ENCODE measurements at regions of chr9 and their contacts with region 1.

Region 1: DNA sequence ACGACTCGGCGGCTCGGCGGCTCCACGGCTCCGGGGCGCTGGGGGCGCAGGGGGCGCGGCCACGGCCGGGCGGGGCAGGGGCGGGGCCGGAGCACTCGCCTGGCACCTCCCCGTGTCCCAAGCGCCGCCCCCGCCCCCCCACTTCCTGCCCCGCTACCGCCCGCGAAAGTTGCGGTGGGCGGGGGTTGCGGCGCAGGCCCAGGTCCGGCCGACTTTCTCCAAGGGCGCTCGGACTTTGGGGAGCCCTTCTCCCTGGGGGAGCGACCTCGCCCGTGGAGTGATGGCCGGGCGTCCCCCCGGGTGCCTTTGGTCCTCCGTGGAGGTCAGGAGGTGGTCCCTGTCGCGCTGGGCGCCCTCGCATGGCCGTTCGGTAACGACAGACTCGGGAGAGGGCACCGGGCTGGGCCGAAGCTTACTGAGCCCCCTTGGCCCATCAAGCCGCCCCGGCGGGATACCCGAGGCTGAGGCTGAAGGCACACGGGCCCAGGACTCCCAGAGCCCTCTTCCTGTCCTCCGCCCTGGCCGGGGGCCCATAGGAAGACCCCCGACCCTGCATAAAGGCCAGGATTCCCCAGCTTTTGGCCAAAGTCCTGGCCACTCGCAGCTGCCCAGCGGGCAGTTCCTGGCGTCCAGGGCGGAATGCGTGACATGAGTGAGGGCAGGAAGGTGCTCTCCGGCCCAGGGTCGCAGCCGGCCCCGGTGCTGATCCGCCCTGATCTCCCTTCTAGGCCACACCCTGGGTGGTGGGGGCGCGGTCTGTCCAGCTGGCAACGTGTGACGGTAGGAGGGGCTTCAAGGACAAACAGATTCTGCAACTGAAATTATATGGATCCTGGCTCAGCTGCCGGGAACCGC is 883 bp upstream of the VAV2 start:
- DNase-seq: peak; percentile 79 to 88
- H3K4me3 ChIP-seq: peak overlapping the region; percentile 75
- H3K4me3 Mint-ChIP-seq: peak overlapping the region; percentile 95
- H3K27ac Mint-ChIP-seq: no peak overlapping the region
- H3K4me1 ChIP-seq: peaks cover 23% of the 10 kb centered on the region
- H3K4me1 Mint-ChIP-seq: no peaks in the 10 kb centered on the region
- H3K27me3 ChIP-seq: no peaks in the 10 kb centered on the region
- H3K27me3 Mint-ChIP-seq: no peaks in the 10 kb centered on the region
- CTCF ChIP-seq: peak; percentile 29 to 32

Region 2: GRCh38 chr9:133782157-133783130 is 210.6 kb before region 1 on chr9:
- CTCF ChIA-PET with region 1: interaction called, 31 read pairs
- POLR2A ChIA-PET with region 1: no interaction called
- intact Hi-C with region 1: loop called (anchors 1 kb)
- DNase-seq: peak; percentile 70 to 81
- H3K4me3 ChIP-seq: no peak overlapping the region
- H3K4me3 Mint-ChIP-seq: no peak overlapping the region
- H3K27ac Mint-ChIP-seq: no peak overlapping the region
- H3K4me1 ChIP-seq: peaks cover 9% of the 10 kb centered on the region
- H3K4me1 Mint-ChIP-seq: no peaks in the 10 kb centered on the region
- H3K27me3 ChIP-seq: no peaks in the 10 kb centered on the region
- H3K27me3 Mint-ChIP-seq: no peaks in the 10 kb centered on the region
- CTCF ChIP-seq: peak; percentile 83

Region 3: GRCh38 chr9:133855802-133856521 is 137.0 kb before region 1 on chr9:
- CTCF ChIA-PET with region 1: no interaction called
- POLR2A ChIA-PET with region 1: no interaction called
- intact Hi-C with region 1: loop called (anchors 2 kb)
- DNase-seq: peak; percentile 77 to 94
- H3K4me3 ChIP-seq: no peak overlapping the region
- H3K4me3 Mint-ChIP-seq: peak overlapping the region; percentile 54
- H3K27ac Mint-ChIP-seq: peak overlapping the region; percentile 94
- H3K4me1 ChIP-seq: peaks cover 28% of the 10 kb centered on the region
- H3K4me1 Mint-ChIP-seq: peaks cover 16% of the 10 kb centered on the region
- H3K27me3 ChIP-seq: no peaks in the 10 kb centered on the region
- H3K27me3 Mint-ChIP-seq: no peaks in the 10 kb centered on the region
- CTCF ChIP-seq: no peak

Region 4: DNA sequence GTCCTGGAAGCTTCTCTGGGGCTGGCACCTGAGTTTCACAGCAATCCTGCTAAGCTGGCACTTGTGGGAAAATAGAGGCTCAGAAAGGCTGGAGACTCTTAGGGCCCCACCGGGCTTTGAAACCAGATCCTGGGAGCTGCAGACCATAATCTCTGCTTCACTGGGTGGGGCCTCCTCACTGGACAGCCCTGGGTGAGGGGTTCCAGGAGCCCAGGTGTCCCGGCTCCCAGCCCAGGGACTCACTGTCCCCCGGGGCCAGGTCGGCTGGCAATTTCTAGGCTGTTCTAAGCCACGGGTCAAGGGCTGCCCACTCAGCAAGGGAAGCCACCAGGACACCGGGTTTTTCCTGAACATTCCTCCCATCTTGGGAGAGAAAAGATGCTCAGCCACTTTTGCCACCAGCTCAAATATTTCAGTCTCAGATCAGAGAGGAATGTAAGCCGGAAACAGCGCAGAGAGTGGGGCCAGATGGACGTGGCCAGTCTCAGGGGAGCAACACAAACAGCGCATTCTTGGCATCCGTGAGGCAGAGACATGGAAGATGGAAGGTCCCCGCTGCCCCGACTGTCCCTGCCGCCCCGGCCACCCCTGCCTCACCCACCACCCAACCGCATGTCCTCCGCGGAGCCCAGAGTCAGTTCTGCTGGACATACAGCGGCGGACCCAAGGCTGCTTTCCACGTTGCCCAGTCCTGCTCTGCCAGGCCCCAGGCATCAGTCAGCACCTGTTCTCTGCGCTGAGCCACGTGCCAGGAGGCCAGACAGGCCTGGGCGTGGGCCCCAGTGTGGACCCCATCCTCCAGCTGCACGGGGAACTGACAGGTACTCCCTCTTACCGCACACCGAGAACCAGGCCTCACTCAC is 73.5 kb before region 1 on chr9:
- CTCF ChIA-PET with region 1: interaction called, 6 read pairs
- POLR2A ChIA-PET with region 1: no interaction called
- intact Hi-C with region 1: loop called (anchors 5 kb)
- DNase-seq: no peak
- H3K4me3 ChIP-seq: no peak overlapping the region
- H3K4me3 Mint-ChIP-seq: no peak overlapping the region
- H3K27ac Mint-ChIP-seq: peak overlapping the region; percentile 7
- H3K4me1 ChIP-seq: no peaks in the 10 kb centered on the region
- H3K4me1 Mint-ChIP-seq: peaks cover 14% of the 10 kb centered on the region
- H3K27me3 ChIP-seq: no peaks in the 10 kb centered on the region
- H3K27me3 Mint-ChIP-seq: no peaks in the 10 kb centered on the region
- CTCF ChIP-seq: no peak